ENCODE measurements at regions of chr6 and their contacts with region 1.

Region 1: GRCh38 chr6:10404107-10404798 is 10.6 kb downstream of the TFAP2A start:
- DNase-seq: peak; percentile 88 to 98
- H3K4me3 ChIP-seq: peak overlapping the region; percentile 83
- H3K27ac ChIP-seq: peak overlapping the region; percentile 98
- H3K4me1 ChIP-seq: peaks cover 74% of the 10 kb centered on the region
- H3K27me3 ChIP-seq: no peaks in the 10 kb centered on the region
- CTCF ChIP-seq: peak; percentile 38; the same call in 1 of the 2 replicates

Region 2: GRCh38 chr6:8983188-8983688 is 1421.0 kb before region 1 on chr6:
- CTCF ChIA-PET with region 1: no interaction called
- POLR2A ChIA-PET with region 1: no interaction called
- intact Hi-C with region 1: loop called (anchors 5 kb)
- DNase-seq: peak in 1 of 2 experiments; percentile 76
- H3K4me3 ChIP-seq: no peak overlapping the region
- H3K27ac ChIP-seq: no peak overlapping the region
- H3K4me1 ChIP-seq: no peaks in the 10 kb centered on the region
- H3K27me3 ChIP-seq: no peaks in the 10 kb centered on the region
- CTCF ChIP-seq: peak; percentile 86

Region 3: DNA sequence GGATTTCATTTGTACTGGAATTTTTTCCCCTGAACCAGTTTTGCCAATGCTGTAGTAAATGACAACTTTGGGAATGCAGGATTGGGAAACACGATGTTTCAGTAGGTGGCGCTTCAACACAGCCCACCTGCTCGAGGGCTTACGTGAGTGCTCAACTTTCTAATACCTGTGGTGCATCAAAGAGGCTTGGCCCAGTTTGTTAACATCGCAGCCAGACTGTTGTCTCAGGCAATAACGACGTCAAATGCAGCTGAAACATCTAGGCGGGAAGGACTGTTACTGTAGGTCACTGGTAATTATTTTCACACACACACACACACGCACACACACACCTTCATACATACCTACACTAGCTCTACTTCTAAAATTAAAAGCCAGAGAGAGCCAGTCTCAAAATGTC is 1153.4 kb before region 1 on chr6:
- CTCF ChIA-PET with region 1: no interaction called
- POLR2A ChIA-PET with region 1: no interaction called
- intact Hi-C with region 1: loop called (anchors 2 kb)
- DNase-seq: peak; percentile 43 to 67
- H3K4me3 ChIP-seq: no peak overlapping the region
- H3K27ac ChIP-seq: no peak overlapping the region
- H3K4me1 ChIP-seq: no peaks in the 10 kb centered on the region
- H3K27me3 ChIP-seq: no peaks in the 10 kb centered on the region
- CTCF ChIP-seq: peak; percentile 61

Region 4: DNA sequence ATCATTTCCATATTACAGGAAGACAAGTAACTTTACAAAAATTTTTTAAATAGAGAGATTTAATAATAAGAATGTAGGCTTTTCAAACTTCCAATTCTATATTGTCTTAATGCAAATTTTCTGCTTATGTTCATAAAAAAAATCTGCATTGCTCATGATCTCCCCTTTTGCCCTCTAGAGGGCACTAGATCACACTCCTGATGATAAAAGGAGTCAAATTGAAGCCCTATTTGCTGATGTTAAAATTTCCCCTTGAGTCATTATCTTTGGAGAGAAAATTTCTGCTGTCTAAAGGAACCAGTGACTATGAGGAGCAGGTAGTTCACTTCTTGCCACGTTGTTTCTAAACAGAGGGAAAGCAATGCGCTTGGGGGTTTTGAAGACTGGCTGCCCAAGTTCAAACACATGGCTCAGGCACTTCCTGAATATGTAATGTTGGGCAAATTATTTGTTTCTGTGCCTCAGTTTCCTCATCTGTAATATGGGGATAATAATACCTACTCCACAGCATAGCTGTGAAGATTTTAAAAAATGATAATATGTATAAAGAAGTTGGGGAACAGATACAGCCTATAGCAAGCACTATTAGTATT is 863.6 kb before region 1 on chr6:
- CTCF ChIA-PET with region 1: no interaction called
- POLR2A ChIA-PET with region 1: no interaction called
- intact Hi-C with region 1: loop called (anchors 5 kb)
- DNase-seq: peak; percentile 22 to 38
- H3K4me3 ChIP-seq: no peak overlapping the region
- H3K27ac ChIP-seq: no peak overlapping the region
- H3K4me1 ChIP-seq: no peaks in the 10 kb centered on the region
- H3K27me3 ChIP-seq: no peaks in the 10 kb centered on the region
- CTCF ChIP-seq: peak; percentile 73

Region 5: DNA sequence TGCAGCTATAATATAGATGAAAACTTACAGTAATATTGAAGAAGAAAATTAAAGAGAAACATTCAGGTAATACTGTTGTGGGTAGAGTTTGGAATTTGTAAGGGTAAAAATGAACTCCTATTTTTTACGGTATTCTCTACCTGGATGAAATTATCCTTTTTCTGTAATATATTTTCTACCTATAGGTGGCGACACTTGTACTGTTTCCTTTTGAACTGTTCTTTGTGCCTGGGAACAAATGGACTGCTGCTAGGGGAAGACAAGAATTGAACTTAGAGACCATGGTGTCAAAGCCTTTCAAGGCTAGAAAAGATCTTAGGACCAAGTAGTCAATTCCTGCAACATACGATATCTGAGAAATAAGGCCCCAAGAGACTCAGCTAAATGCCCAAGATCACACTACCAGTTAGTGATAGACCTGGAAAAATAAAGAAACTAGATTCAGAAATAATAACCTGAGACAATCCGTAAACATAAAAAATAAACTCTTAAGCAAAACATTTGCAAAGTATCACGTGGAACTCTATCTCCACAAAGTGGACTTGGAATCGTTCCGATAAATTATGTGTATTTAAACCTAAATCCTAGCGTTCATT is 373.2 kb before region 1 on chr6:
- CTCF ChIA-PET with region 1: no interaction called
- POLR2A ChIA-PET with region 1: no interaction called
- intact Hi-C with region 1: loop called (anchors 1 kb)
- DNase-seq: no peak
- H3K4me3 ChIP-seq: no peak overlapping the region
- H3K27ac ChIP-seq: no peak overlapping the region
- H3K4me1 ChIP-seq: peaks cover 28% of the 10 kb centered on the region
- H3K27me3 ChIP-seq: no peaks in the 10 kb centered on the region
- CTCF ChIP-seq: peak; percentile 58

Region 6: DNA sequence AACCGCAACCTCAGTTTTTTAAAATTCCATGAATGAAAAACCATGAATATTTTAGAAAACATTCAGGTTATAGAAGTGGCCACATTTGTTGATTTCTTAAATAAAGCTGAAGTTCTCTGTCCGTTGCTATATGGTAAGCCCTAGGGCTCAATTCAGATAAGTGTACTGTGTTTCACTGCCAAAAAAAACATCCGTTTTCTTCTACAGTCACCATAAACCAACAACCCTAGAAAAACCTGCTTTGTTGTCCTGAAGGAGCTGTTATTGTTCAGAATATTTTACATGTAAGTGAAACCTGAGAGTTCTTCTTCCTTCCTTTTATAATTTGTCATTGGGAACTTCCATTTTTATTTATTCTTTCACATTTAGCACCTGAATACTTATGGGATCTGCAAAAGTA is 263.4 kb before region 1 on chr6:
- CTCF ChIA-PET with region 1: no interaction called
- POLR2A ChIA-PET with region 1: interaction called, 3 read pairs
- intact Hi-C with region 1: loop called (anchors 5 kb)
- DNase-seq: peak in 1 of 2 experiments; percentile 74
- H3K4me3 ChIP-seq: no peak overlapping the region
- H3K27ac ChIP-seq: no peak overlapping the region
- H3K4me1 ChIP-seq: peaks cover 23% of the 10 kb centered on the region
- H3K27me3 ChIP-seq: no peaks in the 10 kb centered on the region
- CTCF ChIP-seq: no peak

Region 7: GRCh38 chr6:10194816-10195639 is 209.2 kb before region 1 on chr6:
- CTCF ChIA-PET with region 1: no interaction called
- POLR2A ChIA-PET with region 1: no interaction called
- intact Hi-C with region 1: no loop called
- DNase-seq: peak; percentile 37 to 75
- H3K4me3 ChIP-seq: no peak overlapping the region
- H3K27ac ChIP-seq: peak overlapping the region; percentile 22; the same call in 1 of the 2 replicates
- H3K4me1 ChIP-seq: peaks cover 20% of the 10 kb centered on the region
- H3K27me3 ChIP-seq: no peaks in the 10 kb centered on the region
- CTCF ChIP-seq: no peak

Region 8: DNA sequence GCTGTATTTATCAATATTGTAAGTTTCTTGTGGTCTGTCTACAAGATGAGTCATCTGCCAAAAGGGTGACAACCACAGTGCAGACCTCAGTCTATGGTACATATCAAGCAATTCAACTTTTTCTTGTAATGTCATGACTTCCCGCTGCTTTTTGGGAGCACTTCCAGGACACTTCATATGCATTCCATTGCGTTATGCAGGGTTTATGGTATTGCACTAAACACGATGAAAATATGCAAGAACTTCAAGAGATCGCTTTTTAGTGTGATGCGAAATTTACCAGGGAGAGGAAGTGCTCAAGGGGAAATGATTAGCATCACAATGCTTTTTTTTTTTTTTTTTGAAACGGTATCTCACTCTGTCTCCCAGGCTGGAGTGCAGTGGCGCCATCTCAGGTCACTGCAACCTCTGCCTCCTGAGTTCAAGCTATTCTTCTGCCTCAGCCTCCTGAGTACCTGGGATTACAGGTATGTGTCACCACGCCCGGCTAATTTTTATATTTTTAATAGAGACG is 155.8 kb before region 1 on chr6:
- CTCF ChIA-PET with region 1: no interaction called
- POLR2A ChIA-PET with region 1: no interaction called
- intact Hi-C with region 1: loop called (anchors 5 kb)
- DNase-seq: peak; percentile 55 to 82
- H3K4me3 ChIP-seq: no peak overlapping the region
- H3K27ac ChIP-seq: no peak overlapping the region
- H3K4me1 ChIP-seq: 0 out of 2 replicates have a peak, but pooled peaks cover 7% of the 10 kb centered on the region
- H3K27me3 ChIP-seq: no peaks in the 10 kb centered on the region
- CTCF ChIP-seq: no peak